Endothelial cell of umbilical vein (primary cell): ENCODE measurements at regions of chr2 and their contacts with region 1.

Region 1: DNA sequence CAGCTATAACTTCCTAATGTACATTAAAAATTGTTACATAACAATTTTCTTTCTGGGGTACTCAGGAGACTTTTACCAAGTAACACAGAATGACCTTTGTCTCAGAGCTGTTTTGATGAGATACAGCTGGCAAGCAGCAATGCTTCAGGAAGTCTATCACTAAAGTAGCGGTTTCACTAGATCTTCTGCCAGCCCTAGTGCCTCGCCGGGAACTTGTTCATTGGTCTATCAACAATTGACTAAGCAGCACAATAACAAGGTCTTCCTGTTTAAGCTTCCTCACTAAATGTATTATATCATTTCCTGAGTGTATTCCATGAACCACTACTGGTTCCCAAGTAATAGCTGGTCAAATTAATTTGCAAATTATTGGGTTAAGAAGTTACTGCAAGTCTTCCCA is 69.2 kb downstream of the TRIP12 start:
- DNase-seq: peak; percentile 97
- H3K4me3 ChIP-seq: peak overlapping the region in 1 of 3 experiments; percentile 37
- H3K27ac ChIP-seq: peak overlapping the region; percentile 77
- H3K4me1 ChIP-seq: peaks cover 57% of the 10 kb centered on the region
- H3K27me3 ChIP-seq: no peaks in the 10 kb centered on the region
- CTCF ChIP-seq: no peak
- POLR2A ChIP-seq: peak; percentile 28

Region 2: GRCh38 chr2:229869226-229869625 is 16.7 kb after region 1 on chr2:
- CTCF ChIA-PET with region 1: interaction called, 10 read pairs
- POLR2A ChIA-PET with region 1: no interaction called
- dilution Hi-C with region 1: no loop called
- intact Hi-C with region 1: loop called (anchors 2 kb)
- DNase-seq: no peak
- H3K4me3 ChIP-seq: no peak overlapping the region
- H3K27ac ChIP-seq: no peak overlapping the region
- H3K4me1 ChIP-seq: peaks cover 11% of the 10 kb centered on the region
- H3K27me3 ChIP-seq: no peaks in the 10 kb centered on the region
- CTCF ChIP-seq: no peak
- POLR2A ChIP-seq: no peak